Endothelial cell of umbilical vein (primary cell): ENCODE measurements at regions of chr3 and their contacts with region 1.

Region 1: GRCh38 chr3:38453075-38453912 is at the start of gene ACVR2B:
- DNase-seq: peak; percentile 69
- H3K4me3 ChIP-seq: peak within 1 kb of the TSS; percentile 37 to 85 (median 68)
- H3K27ac ChIP-seq: peak within 1 kb of the TSS; percentile 45
- H3K4me1 ChIP-seq: no peaks in the 10 kb centered on the region
- H3K27me3 ChIP-seq: no peaks in the 10 kb centered on the region
- CTCF ChIP-seq: no peak
- POLR2A ChIP-seq: no peak
- total RNA-seq, gene ACVR2B: 4.9 and 5.6 TPM in 2 replicates

Region 2: DNA sequence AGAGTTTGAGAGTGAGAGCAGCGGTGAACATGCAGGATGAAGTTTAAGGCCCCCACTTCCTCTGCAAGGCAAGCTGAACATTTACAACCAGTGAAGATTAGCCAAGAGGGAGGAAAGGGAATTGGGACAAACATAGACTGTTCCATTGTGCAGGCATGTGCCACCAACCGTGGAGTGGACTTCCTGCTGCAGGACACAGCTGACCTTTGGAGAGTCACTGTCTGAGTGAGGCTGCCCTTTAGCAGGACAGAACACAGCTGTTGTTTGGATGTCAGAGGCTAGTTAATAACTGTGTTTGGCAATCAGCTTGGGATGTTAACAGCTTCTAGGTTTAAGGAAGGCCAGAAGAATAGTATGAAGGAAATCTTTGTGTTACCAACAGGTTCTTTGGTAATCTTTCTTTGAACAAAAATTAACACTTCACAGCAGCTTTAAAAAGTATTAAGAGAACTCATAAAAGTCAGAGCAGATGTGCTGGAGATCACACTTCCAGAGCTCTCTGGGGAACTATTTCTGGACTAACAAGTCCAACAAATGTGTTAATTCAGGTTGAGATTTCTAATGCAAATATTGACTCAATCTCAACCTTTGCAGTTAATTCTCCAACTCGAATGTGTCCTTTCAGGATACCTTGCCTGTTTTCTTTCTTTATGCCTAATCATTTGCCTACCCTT is 560.2 kb before region 1 on chr3:
- CTCF ChIA-PET with region 1: no interaction called
- POLR2A ChIA-PET with region 1: no interaction called
- dilution Hi-C with region 1: no loop called
- intact Hi-C with region 1: no loop called
- DNase-seq: peak; percentile 65
- H3K4me3 ChIP-seq: no peak overlapping the region
- H3K27ac ChIP-seq: no peak overlapping the region
- H3K4me1 ChIP-seq: peaks cover 16% of the 10 kb centered on the region
- H3K27me3 ChIP-seq: no peaks in the 10 kb centered on the region
- CTCF ChIP-seq: no peak
- POLR2A ChIP-seq: no peak

Region 3: GRCh38 chr3:38383156-38383875 is 70.0 kb before region 1 on chr3:
- CTCF ChIA-PET with region 1: no interaction called
- POLR2A ChIA-PET with region 1: no interaction called
- dilution Hi-C with region 1: no loop called
- intact Hi-C with region 1: no loop called
- DNase-seq: no peak
- H3K4me3 ChIP-seq: no peak overlapping the region
- H3K27ac ChIP-seq: no peak overlapping the region
- H3K4me1 ChIP-seq: no peaks in the 10 kb centered on the region
- H3K27me3 ChIP-seq: no peaks in the 10 kb centered on the region
- CTCF ChIP-seq: no peak
- POLR2A ChIP-seq: no peak

Region 4: GRCh38 chr3:38479431-38480092 is 26.3 kb after region 1 on chr3:
- CTCF ChIA-PET with region 1: interaction called, 4 read pairs
- POLR2A ChIA-PET with region 1: no interaction called
- dilution Hi-C with region 1: no loop called
- intact Hi-C with region 1: loop called (anchors 1 kb)
- DNase-seq: peak; percentile 64
- H3K4me3 ChIP-seq: no peak overlapping the region
- H3K27ac ChIP-seq: no peak overlapping the region
- H3K4me1 ChIP-seq: no peaks in the 10 kb centered on the region
- H3K27me3 ChIP-seq: no peaks in the 10 kb centered on the region
- CTCF ChIP-seq: peak; percentile 77 to 84
- POLR2A ChIP-seq: no peak

Region 5: GRCh38 chr3:39065197-39065596 is 611.9 kb after region 1 on chr3:
- CTCF ChIA-PET with region 1: no interaction called
- POLR2A ChIA-PET with region 1: no interaction called
- dilution Hi-C with region 1: no loop called
- intact Hi-C with region 1: no loop called
- DNase-seq: peak; percentile 29
- H3K4me3 ChIP-seq: no peak overlapping the region
- H3K27ac ChIP-seq: no peak overlapping the region
- H3K4me1 ChIP-seq: no peaks in the 10 kb centered on the region
- H3K27me3 ChIP-seq: no peaks in the 10 kb centered on the region
- CTCF ChIP-seq: peak in 1 of 2 donors; percentile 56
- POLR2A ChIP-seq: no peak